ENCODE measurements at regions of chr2 and their contacts with region 1.

Region 1: GRCh38 chr2:207867905-207868304 is 98.2 kb upstream of the FZD5 start:
- DNase-seq: no peak
- ATAC-seq: no peak
- H3K4me3 Mint-ChIP-seq: no peak overlapping the region
- H3K27ac Mint-ChIP-seq: no peak overlapping the region
- H3K4me1 Mint-ChIP-seq: peaks cover 11% of the 10 kb centered on the region
- H3K27me3 Mint-ChIP-seq: no peaks in the 10 kb centered on the region
- CTCF ChIP-seq: no peak

Region 2: DNA sequence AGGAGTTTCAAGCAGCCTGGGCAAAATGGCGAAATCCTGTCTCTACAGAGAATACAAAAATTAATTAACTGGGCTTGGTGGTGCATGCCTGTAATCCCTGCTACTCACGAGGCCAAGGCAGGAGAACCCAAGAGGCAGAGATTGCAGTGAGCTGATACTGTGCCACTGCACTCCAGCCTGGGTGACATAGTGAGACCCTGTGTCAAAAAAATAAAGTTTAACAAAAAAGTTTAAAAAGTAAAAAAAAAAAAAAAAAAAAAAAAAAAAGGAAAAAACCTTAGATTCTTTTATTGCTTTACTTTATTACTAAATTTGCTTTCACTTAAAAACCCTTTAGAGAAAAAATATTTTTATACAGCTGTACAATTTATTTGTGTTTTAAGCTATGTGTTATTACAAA is 327.5 kb before region 1 on chr2:
- CTCF ChIA-PET with region 1: no interaction called
- POLR2A ChIA-PET with region 1: interaction called, 13 read pairs
- DNase-seq: no peak
- ATAC-seq: no peak
- H3K4me3 Mint-ChIP-seq: no peak overlapping the region
- H3K27ac Mint-ChIP-seq: no peak overlapping the region
- H3K4me1 Mint-ChIP-seq: peaks cover 31% of the 10 kb centered on the region
- H3K27me3 Mint-ChIP-seq: no peaks in the 10 kb centered on the region
- CTCF ChIP-seq: no peak

Region 3: GRCh38 chr2:207854484-207855440 is 13.1 kb before region 1 on chr2:
- CTCF ChIA-PET with region 1: no interaction called
- POLR2A ChIA-PET with region 1: no interaction called
- DNase-seq: no peak
- ATAC-seq: no peak
- H3K4me3 Mint-ChIP-seq: no peak overlapping the region
- H3K27ac Mint-ChIP-seq: peak overlapping the region; percentile 44; the same call in 1 of the 2 replicates
- H3K4me1 Mint-ChIP-seq: peaks cover 12% of the 10 kb centered on the region
- H3K27me3 Mint-ChIP-seq: no peaks in the 10 kb centered on the region
- CTCF ChIP-seq: no peak

Measured in WTC11 (cell line).